Prostate gland (tissue), 2 donors: ENCODE measurements at regions of chr13 and their contacts with region 1.

Region 1: DNA sequence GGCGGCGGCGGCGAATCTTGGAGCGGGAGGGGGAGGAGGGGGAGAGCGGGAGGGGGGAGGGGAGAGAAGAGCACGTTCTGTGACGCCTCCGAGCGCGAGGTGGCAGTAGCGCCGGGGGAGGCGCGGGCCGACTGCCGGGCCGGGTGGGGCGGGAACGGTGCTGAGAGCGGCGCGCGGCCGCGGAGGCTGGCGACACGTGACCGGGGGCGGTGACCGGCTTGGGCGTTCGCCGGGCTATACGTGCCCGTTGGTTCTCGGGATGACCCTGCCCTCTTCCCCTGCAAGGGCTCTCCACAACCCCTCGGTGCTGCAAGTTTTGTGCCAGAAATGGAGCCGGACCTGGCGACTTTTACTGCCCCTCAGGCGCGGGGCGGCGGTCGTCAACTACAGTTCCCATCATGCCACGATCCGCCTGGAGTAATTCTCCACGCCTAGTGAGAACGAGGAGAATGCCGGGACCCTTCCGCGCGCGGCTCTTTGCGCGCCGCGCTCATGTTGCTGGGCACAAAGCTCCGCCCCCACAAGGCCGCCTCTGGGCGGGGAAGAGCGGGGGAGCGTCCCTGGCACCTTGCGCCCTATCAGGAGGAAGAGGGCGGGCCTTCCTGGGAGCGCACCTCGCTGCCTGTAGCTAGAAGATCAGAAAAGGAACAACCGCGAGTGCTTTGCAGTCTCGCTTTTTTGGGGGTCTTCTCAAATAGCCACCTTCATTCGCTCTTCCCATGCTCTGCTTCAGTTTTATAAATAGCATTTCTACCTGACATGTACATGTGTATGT is at the start of gene KPNA3:
- DNase-seq: peak; percentile 97
- H3K4me3 ChIP-seq: peak within 1 kb of the TSS; percentile 79 to 91
- H3K27ac ChIP-seq: peak within 1 kb of the TSS; percentile 74 to 94
- H3K4me1 ChIP-seq: no peaks in the 10 kb centered on the region
- H3K27me3 ChIP-seq: no peaks in the 10 kb centered on the region
- CTCF ChIP-seq: peak in 3 of 4 experiments; percentile 10 to 32 (median 16)
- POLR2A ChIP-seq: peak; percentile 83
- total RNA-seq, gene KPNA3: 16.9 to 26.4 TPM

Region 2: GRCh38 chr13:49652355-49653305 is 140.1 kb before region 1 on chr13:
- intact Hi-C with region 1: loop called (anchors 5 kb)
- DNase-seq: peak; percentile 26
- H3K4me3 ChIP-seq: no peak overlapping the region
- H3K27ac ChIP-seq: no peak overlapping the region
- H3K4me1 ChIP-seq: no peaks in the 10 kb centered on the region
- H3K27me3 ChIP-seq: no peaks in the 10 kb centered on the region
- CTCF ChIP-seq: peak in 3 of 4 experiments; percentile 30 to 51 (median 34)
- POLR2A ChIP-seq: no peak

Region 3: GRCh38 chr13:49690992-49691886 is 101.5 kb before region 1 on chr13 and contains the start of gene EBPL:
- intact Hi-C with region 1: loop called (anchors 2 kb)
- DNase-seq: peak; percentile 94
- H3K4me3 ChIP-seq: peak within 1 kb of the TSS; percentile 59 to 78
- H3K27ac ChIP-seq: peak within 1 kb of the TSS; percentile 78 to 83
- H3K4me1 ChIP-seq: peaks cover 4% of the 10 kb centered on the region
- H3K27me3 ChIP-seq: no peaks in the 10 kb centered on the region
- CTCF ChIP-seq: no peak
- POLR2A ChIP-seq: peak; percentile 36
- total RNA-seq, gene EBPL: 95.4 to 114 TPM

Region 4: GRCh38 chr13:49840266-49840665 is 47.5 kb after region 1 on chr13:
- intact Hi-C with region 1: loop called (anchors 5 kb)
- DNase-seq: no peak
- H3K4me3 ChIP-seq: no peak overlapping the region
- H3K27ac ChIP-seq: no peak overlapping the region
- H3K4me1 ChIP-seq: no peaks in the 10 kb centered on the region
- H3K27me3 ChIP-seq: no peaks in the 10 kb centered on the region
- CTCF ChIP-seq: no peak
- POLR2A ChIP-seq: no peak

Region 5: GRCh38 chr13:49855930-49856329 is 63.2 kb after region 1 on chr13:
- intact Hi-C with region 1: no loop called
- DNase-seq: no peak
- H3K4me3 ChIP-seq: no peak overlapping the region
- H3K27ac ChIP-seq: no peak overlapping the region
- H3K4me1 ChIP-seq: peaks cover 7% of the 10 kb centered on the region
- H3K27me3 ChIP-seq: no peaks in the 10 kb centered on the region
- CTCF ChIP-seq: no peak
- POLR2A ChIP-seq: no peak

Region 6: GRCh38 chr13:49877629-49878218 is 85.0 kb after region 1 on chr13:
- intact Hi-C with region 1: no loop called
- DNase-seq: no peak
- H3K4me3 ChIP-seq: no peak overlapping the region
- H3K27ac ChIP-seq: no peak overlapping the region
- H3K4me1 ChIP-seq: no peaks in the 10 kb centered on the region
- H3K27me3 ChIP-seq: no peaks in the 10 kb centered on the region
- CTCF ChIP-seq: no peak
- POLR2A ChIP-seq: no peak

Region 7: DNA sequence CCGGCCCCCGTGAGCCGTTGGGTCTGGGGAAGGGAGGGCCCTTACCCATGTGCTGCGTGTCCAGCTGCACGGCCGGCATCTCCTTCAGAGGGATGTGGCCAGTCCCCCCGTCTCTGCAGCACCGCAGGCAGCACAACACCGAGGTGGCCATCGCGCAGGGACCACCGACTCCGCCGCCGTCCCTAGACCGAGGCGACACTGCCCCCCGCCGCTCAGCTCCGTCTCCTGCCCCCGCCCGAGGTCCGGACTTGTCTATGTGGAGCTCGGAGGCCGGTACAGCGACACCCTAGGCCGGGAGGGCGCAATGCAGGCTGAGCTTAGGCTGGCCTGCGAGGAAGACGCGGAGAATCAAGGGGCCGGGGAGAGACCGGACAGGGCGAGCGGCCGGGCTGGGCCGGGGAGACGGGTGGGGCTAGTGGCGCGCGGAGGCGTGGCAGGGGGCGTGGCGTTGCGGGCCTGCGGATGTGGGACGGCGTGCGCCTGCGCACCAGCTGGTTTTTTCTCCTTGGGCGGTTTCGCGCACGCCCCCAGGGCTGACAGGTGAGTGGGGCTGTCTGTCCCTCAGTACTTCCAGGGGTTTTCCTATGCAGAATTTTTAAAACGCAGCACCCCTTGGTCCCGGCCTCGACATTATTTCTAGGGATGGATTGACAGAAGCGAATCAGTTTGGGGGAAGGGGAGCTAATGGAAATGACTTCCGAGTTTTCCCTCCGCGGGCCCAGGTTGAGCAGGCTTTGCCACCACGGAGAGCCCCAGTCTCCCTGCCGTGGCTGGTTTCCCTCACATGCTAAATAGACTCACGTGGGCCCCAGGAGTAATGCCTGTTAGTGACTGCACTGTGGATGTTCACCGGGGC is 143.6 kb after region 1 on chr13 and contains the start of gene SPRYD7:
- intact Hi-C with region 1: loop called (anchors 2 kb)
- DNase-seq: peak; percentile 97
- H3K4me3 ChIP-seq: peak within 1 kb of the TSS; percentile 65 to 92
- H3K27ac ChIP-seq: peak within 1 kb of the TSS; percentile 78 to 90
- H3K4me1 ChIP-seq: no peaks in the 10 kb centered on the region
- H3K27me3 ChIP-seq: no peaks in the 10 kb centered on the region
- CTCF ChIP-seq: peak; percentile 62 to 97 (median 90)
- POLR2A ChIP-seq: no peak
- total RNA-seq, gene SPRYD7: 6.9 to 8.4 TPM